Esophagus muscularis mucosa (tissue), 4 donors: ENCODE measurements at regions of chr9 and their contacts with region 1.

Region 1: DNA sequence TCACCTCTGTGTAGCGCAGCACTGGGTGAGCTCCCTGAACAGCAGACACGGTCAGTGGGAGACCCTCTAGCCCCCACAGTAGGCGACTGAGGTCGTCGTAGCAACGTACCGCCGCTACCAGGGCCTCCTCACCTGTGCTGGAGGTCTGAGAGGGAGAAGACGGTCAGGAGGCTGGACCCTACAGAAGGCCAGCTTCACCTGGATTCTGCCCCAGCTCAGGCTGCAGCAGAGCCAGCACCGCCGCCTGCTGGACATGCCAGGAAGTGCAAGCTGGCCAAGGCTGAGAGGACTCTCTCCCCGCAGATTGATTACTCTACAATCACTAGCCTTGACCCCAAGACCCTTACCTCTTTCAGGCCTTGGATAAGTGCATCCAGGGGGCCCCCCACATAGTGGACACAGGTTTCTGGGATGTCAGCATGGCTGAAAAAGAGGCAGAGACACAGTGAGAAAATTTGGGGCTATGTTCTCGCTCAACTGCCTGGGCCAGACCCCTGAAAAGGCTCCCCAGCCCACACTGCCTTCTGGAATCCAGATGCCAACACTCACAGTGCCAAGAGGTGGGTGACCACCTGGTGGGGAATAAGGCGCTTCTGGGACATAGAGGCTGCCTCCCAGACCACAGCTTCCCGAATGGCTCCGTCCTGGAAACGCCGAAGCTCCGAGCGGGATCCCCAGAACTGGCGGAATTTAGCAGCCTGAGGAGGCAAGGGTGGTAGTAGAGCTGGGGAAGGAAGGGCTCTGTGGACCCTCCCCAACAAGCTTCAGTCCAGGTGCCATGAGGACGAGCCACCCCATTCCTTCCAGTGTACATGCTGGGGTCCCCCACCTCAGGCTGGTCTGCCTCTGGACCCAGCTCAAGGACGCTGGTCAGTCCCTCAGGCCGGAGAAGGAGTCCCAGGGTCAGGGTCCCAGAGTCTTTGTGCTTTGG is 6.9 kb downstream of the NOL6 start:
- DNase-seq: no peak
- H3K4me3 ChIP-seq: no peak overlapping the region
- H3K27ac ChIP-seq: no peak overlapping the region
- H3K4me1 ChIP-seq: peaks cover 0 to 7% (median under 1%) of the 10 kb centered on the region in 4 donors
- H3K27me3 ChIP-seq: no peaks in the 10 kb centered on the region
- CTCF ChIP-seq: peak in 2 of 3 experiments; percentile 86 to 87
- EP300 ChIP-seq: no peak
- POLR2A ChIP-seq: no peak

Region 2: DNA sequence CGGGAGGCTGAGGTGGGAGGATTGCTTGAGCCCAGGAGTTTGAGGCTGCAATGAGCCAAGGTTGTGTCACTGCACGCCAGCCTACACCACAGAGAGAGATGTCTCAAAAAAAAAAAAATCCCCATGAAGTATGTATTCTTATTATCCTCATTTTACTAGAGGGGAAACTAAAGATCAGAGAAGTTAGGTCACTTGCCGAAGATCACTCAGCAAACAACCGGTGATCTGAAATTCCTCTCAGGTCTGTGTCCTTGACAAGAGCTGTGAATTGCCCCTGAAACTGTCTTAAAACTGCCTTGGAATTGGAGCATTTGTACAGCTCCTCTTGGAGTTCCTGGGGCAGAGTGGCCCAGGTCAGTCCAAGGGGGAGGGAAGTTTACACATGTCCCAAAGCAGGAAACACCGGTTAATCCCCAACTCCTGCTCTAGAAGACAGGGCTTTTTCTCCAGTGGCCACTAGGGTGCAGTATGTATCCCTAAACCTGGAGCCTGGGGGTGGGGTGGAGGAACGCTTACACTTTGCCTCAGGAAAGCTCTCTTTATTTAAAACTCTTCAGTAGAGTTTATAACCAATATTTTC is 92.1 kb before region 1 on chr9:
- intact Hi-C with region 1: loop called (anchors 1 kb)
- DNase-seq: peak; percentile 95
- H3K4me3 ChIP-seq: peak overlapping the region; percentile 20 to 28 (median 25)
- H3K27ac ChIP-seq: peak overlapping the region; percentile 37 to 57 (median 48)
- H3K4me1 ChIP-seq: peaks cover 13 to 21% (median 15%) of the 10 kb centered on the region in 4 donors
- H3K27me3 ChIP-seq: no peaks in the 10 kb centered on the region
- CTCF ChIP-seq: peak; percentile 85 to 94 (median 89)
- EP300 ChIP-seq: no peak
- POLR2A ChIP-seq: no peak

Region 3: DNA sequence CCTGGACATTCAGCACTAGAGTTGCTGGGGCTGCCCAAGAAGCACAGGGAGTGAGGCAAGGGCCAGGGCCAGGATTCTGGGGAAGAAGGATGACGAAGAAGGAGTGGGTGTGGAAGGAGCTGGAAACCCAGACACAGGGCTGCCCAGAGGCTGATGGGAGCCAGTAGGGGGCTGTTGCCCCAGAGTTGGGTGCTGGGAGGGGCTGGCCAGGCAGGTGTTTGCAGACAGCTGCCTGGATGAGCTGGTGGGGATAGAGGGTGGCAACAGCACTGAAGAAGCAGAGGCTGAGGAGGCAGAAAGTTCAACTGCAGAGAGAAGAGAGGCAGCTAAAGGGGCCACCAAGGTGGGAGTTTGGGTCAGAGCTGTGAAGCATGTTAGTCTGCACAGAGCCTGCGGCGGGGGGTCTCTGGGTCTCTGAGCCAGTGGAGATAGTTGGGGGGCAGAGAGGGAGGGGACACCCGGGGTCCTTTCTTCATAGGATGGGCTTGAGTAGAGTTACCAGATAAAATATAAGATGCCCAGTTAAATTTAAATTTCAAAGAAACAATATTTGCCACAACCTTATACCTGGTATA is 62.0 kb before region 1 on chr9:
- intact Hi-C with region 1: loop called (anchors 5 kb)
- DNase-seq: no peak
- H3K4me3 ChIP-seq: no peak overlapping the region
- H3K27ac ChIP-seq: no peak overlapping the region
- H3K4me1 ChIP-seq: peaks cover 14 to 32% (median 20%) of the 10 kb centered on the region in 4 donors
- H3K27me3 ChIP-seq: no peaks in the 10 kb centered on the region
- CTCF ChIP-seq: no peak
- EP300 ChIP-seq: no peak
- POLR2A ChIP-seq: no peak

Region 4: GRCh38 chr9:33415501-33416038 is 51.3 kb before region 1 on chr9:
- intact Hi-C with region 1: loop called (anchors 5 kb)
- DNase-seq: no peak
- H3K4me3 ChIP-seq: no peak overlapping the region
- H3K27ac ChIP-seq: no peak overlapping the region
- H3K4me1 ChIP-seq: peaks cover 3 to 21% (median 13%) of the 10 kb centered on the region in 4 donors
- H3K27me3 ChIP-seq: peaks cover 0 to 18% (median 0%) of the 10 kb centered on the region in 4 donors
- CTCF ChIP-seq: peak; percentile 76 to 84 (median 77)
- EP300 ChIP-seq: no peak
- POLR2A ChIP-seq: no peak

Region 5: DNA sequence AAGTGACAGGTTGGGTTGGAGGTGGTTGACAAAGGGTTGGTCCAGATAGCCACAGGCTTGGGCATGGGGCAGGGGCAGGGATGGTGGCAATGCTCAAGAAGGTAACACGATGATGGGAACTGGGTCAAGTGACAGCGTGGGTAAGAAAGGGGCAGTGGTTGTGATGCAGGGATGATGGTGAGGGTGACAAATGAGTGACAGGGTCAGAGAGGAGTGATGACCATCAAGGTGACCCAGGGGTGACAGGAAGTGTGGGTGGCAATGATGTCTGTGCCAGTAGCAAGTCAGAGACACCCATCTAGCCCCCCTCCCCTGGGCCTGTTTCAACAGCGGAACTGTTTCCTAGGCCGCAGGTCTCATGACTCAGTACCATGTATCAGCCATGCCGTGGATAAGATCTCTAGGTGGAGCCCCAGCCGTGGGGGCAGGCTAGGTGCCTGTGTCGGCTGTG is 40.0 kb before region 1 on chr9:
- intact Hi-C with region 1: no loop called
- DNase-seq: no peak
- H3K4me3 ChIP-seq: no peak overlapping the region
- H3K27ac ChIP-seq: no peak overlapping the region
- H3K4me1 ChIP-seq: peaks cover 0 to 8% (median 2%) of the 10 kb centered on the region in 4 donors
- H3K27me3 ChIP-seq: no peaks in the 10 kb centered on the region
- CTCF ChIP-seq: no peak
- EP300 ChIP-seq: no peak
- POLR2A ChIP-seq: no peak